ENCODE measurements at regions of chr2 and their contacts with region 1.

Region 1: DNA sequence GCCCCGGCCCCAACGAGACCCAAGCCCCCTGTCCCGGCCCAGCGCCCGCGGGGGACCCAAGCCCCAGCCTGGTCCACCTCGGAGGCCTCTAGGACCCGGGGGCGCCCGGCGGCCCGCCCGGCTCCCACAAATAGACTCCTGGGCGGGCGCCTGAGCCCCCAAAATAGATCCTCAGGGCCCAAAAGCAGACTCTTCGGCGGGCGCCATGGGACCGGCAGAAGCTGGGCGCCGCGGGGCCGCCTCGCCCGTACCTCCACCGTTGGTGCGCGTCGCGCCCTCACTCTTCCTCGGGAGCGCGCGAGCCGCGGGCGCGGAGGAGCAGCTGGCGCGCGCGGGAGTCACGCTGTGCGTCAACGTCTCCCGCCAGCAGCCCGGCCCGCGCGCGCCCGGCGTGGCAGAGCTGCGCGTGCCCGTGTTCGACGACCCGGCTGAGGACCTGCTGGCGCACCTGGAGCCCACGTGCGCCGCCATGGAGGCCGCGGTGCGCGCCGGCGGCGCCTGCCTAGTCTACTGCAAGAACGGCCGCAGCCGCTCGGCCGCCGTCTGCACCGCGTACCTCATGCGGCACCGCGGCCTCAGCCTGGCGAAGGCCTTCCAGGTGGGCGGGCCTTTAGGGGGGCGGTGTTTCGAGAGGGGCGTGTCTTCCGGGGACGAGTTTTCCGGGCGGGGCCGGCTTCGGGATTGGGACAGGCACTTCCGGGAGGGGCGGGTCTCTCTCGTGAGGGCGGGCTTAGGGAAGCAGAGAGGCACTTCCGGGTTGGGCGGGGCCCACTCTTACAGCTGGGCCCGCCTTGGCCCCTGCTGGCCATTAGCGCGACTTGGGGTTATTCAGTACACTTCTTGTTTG is 546 bp downstream of the DUSP28 start:
- DNase-seq: peak; percentile 95
- ATAC-seq: peak; percentile 73
- H3K4me3 ChIP-seq: peak overlapping the region; percentile 67 to 69
- H3K27ac ChIP-seq: peak overlapping the region; percentile 98
- H3K4me1 ChIP-seq: peaks cover 33 to 53% of the 10 kb centered on the region in 2 experiments
- H3K27me3 ChIP-seq: no peaks in the 10 kb centered on the region
- CTCF ChIP-seq: 0 out of 6 replicates have a peak, but pooled peaks of 1 of the 3 experiments have one; percentile 19
- POLR2A ChIP-seq: peak; percentile 63
- RAD21 ChIP-seq: no peak

Region 2: GRCh38 chr2:240579771-240580614 is 19.3 kb after region 1 on chr2:
- CTCF ChIA-PET with region 1: interaction called, 48 read pairs
- POLR2A ChIA-PET with region 1: interaction called, 23 read pairs
- RAD21 ChIA-PET with region 1: interaction called, 5 read pairs
- intact Hi-C with region 1: no loop called
- DNase-seq: peak; percentile 77
- ATAC-seq: peak; percentile 82
- H3K4me3 ChIP-seq: peak overlapping the region; percentile 1 to 40; a peak in 3 of 4 replicates
- H3K27ac ChIP-seq: peak overlapping the region; percentile 77
- H3K4me1 ChIP-seq: peaks cover 42 to 55% of the 10 kb centered on the region in 2 experiments
- H3K27me3 ChIP-seq: no peaks in the 10 kb centered on the region
- CTCF ChIP-seq: peak in 2 of 3 experiments; percentile 62 to 75; a peak in 4 of 6 replicates
- POLR2A ChIP-seq: no peak
- RAD21 ChIP-seq: no peak

Region 3: GRCh38 chr2:240586198-240586918 is 25.7 kb after region 1 on chr2 and contains the start of gene CAPN10:
- CTCF ChIA-PET with region 1: interaction called, 48 read pairs
- POLR2A ChIA-PET with region 1: interaction called, 23 read pairs
- RAD21 ChIA-PET with region 1: interaction called, 4 to 6 read pairs
- intact Hi-C with region 1: loop called (anchors 2 kb)
- DNase-seq: peak; percentile 86
- ATAC-seq: peak; percentile 88
- H3K4me3 ChIP-seq: peak within 1 kb of the TSS; percentile 98 to 99
- H3K27ac ChIP-seq: peak within 1 kb of the TSS; percentile 85
- H3K4me1 ChIP-seq: peaks cover 28 to 47% of the 10 kb centered on the region in 2 experiments
- H3K27me3 ChIP-seq: no peaks in the 10 kb centered on the region
- CTCF ChIP-seq: no peak
- POLR2A ChIP-seq: no peak
- RAD21 ChIP-seq: no peak
- total RNA-seq, gene CAPN10: 40.7 TPM

Measured in HCT116 (cell line).